Heart left ventricle (tissue), 16 donors: ENCODE measurements at regions of chr15 and their contacts with region 1.

Region 1: GRCh38 chr15:60682115-60682514 is 203.2 kb upstream of the ICE2 start:
- DNase-seq: no peak
- ATAC-seq: peak in 2 of 4 donors; percentile 13 to 62
- H3K4me3 ChIP-seq: no peak overlapping the region
- H3K27ac ChIP-seq: peak overlapping the region in 1 of 12 donors; percentile 34
- H3K4me1 ChIP-seq: peaks cover 0 to 18% (median 6%) of the 10 kb centered on the region in 12 donors
- H3K27me3 ChIP-seq: no peaks in the 10 kb centered on the region
- CTCF ChIP-seq: no peak
- POLR2A ChIP-seq: no peak

Region 2: GRCh38 chr15:60614862-60615771 is 67.0 kb before region 1 on chr15:
- intact Hi-C with region 1: loop called in 1 of 10 experiments (anchors 10 kb)
- DNase-seq: no peak
- ATAC-seq: peak in 1 of 4 donors; percentile 13
- H3K4me3 ChIP-seq: no peak overlapping the region
- H3K27ac ChIP-seq: no peak overlapping the region
- H3K4me1 ChIP-seq: peaks cover 0 to 29% (median 10%) of the 10 kb centered on the region in 12 donors
- H3K27me3 ChIP-seq: no peaks in the 10 kb centered on the region
- CTCF ChIP-seq: no peak
- POLR2A ChIP-seq: no peak

Region 3: GRCh38 chr15:60751985-60752952 is 70.2 kb after region 1 on chr15:
- intact Hi-C with region 1: loop called in 1 of 10 experiments (anchors 10 kb)
- DNase-seq: peak in 4 of 5 donors; percentile 45 to 67 (median 52)
- ATAC-seq: peak; percentile 92 to 95 (median 92)
- H3K4me3 ChIP-seq: peak overlapping the region in 9 of 12 donors; percentile 3 to 44 (median 25)
- H3K27ac ChIP-seq: peak overlapping the region; percentile 6 to 81 (median 60)
- H3K4me1 ChIP-seq: peaks cover 0 to 22% (median 12%) of the 10 kb centered on the region in 12 donors
- H3K27me3 ChIP-seq: no peaks in the 10 kb centered on the region
- CTCF ChIP-seq: no peak
- POLR2A ChIP-seq: no peak

Region 4: GRCh38 chr15:60798821-60799220 is 116.7 kb after region 1 on chr15:
- intact Hi-C with region 1: no loop called
- DNase-seq: no peak
- ATAC-seq: peak in 3 of 4 donors; percentile 46 to 85 (median 62)
- H3K4me3 ChIP-seq: no peak overlapping the region
- H3K27ac ChIP-seq: peak overlapping the region in 2 of 12 donors; percentile 16 to 48
- H3K4me1 ChIP-seq: peaks cover 0 to 22% (median 2%) of the 10 kb centered on the region in 12 donors
- H3K27me3 ChIP-seq: no peaks in the 10 kb centered on the region
- CTCF ChIP-seq: no peak
- POLR2A ChIP-seq: no peak